Activated CD4-positive, alpha-beta T cell treated with anti-CD3 and anti-CD28 coated beads, Interleukin-2, amount 10 ng/mL, durations not matched to agents 24 days and 14 days (primary cell): ENCODE measurements at regions of chr6 and their contacts with region 1.

Region 1: GRCh38 chr6:90586836-90587638 is at the start of gene MAP3K7:
- DNase-seq: peak; percentile 99
- H3K4me3 Mint-ChIP-seq: peak within 1 kb of the TSS; percentile 92
- H3K27ac Mint-ChIP-seq: peak within 1 kb of the TSS; percentile 98
- H3K4me1 Mint-ChIP-seq: peaks cover 37% of the 10 kb centered on the region
- H3K27me3 Mint-ChIP-seq: peaks cover 26% of the 10 kb centered on the region
- total RNA-seq, gene MAP3K7: 31.8 TPM in 2 replicates

Region 2: DNA sequence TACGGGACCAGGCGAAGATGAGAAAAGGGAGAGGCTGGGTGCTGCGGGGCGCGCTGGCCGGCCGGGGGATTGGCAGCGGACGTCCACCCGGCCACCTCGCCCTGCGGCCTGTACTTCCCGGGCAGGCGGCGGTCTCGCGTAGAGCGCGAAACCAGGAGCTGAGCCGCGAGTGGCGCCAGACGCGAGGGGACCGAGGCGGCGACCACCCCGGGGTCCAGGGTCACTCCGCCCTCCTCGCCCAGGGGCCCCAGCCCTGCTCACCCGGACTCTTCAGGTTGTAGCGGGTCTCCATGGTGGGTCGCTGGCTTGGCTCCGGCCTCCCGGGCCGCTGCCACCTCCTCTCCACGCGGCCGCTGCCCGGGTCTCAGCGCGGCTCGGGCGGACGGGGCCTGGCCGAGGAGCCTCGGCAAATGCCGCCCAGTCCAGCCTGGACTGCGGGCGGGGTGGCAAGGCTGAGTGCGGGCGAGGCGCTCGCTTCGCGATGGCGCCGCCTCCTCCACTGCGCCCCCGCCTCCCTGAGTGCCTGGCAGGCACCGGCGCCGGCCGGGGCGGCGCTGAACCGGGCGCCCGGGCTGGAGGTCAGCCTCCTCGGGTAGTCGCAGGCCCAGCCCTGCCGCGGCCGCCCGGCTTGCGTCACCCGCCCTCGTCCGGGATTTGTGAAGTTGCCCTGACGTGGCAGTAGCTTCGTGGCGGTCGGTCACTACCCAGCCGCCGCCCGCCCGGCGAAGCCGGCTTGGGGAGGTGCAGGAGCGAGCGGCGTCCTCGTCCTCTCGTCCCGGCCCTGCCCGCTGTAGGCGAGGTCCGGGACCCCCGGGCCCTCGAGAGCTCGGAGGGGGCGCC is 1234.5 kb before region 1 on chr6 and contains the start of gene UBE2J1:
- intact Hi-C with region 1: loop called (anchors 5 kb)
- DNase-seq: peak; percentile 94
- H3K4me3 Mint-ChIP-seq: peak within 1 kb of the TSS; percentile 91
- H3K27ac Mint-ChIP-seq: peak within 1 kb of the TSS; percentile 94
- H3K4me1 Mint-ChIP-seq: peaks cover 66% of the 10 kb centered on the region
- H3K27me3 Mint-ChIP-seq: no peaks in the 10 kb centered on the region
- total RNA-seq, gene UBE2J1: 31.6 and 33.5 TPM in 2 replicates

Region 3: DNA sequence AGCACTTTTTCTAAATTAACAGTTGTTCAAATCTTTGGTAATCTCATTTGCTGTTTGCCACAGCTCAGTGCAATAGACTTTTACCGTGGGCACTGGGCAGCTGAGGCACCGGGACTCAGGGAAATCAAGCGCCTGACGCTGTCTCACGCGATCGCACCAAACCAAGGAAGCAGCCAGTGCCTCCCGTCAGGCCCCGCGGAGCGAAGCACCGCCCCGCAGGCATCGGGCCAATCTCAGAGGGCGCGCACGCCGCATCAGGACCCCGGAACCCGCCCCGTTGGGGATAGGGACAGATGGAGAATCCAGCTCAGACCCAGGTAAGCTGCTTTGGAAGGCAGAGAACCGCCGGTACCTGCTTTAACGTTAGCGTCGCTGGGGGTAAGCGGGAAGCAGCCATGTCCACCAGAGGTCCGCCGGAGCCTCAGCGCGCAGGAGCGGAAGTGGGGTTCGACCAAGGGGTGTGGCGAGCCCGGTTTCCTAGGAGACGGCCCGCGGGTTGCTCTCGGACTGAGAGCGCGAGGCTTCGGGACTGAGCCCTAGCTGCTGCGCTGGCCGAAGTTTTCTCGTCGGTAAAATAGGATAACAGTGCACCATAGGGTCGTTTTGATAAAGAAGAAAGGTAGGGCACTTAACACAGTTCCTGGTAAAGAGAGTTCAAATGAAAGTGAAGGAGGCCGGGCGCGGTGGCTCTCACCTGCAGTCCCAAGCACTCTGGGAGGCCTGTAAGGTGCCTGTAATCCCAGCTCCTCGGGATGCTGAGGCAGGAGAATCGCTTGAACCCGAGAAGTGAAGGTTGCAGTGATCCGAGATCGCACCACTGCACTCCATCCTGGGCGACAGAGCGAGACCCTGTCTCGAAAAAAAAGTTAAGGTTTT is 948.5 kb before region 1 on chr6 and contains the start of gene LYRM2:
- intact Hi-C with region 1: loop called (anchors 2 kb)
- DNase-seq: peak; percentile 97
- H3K4me3 Mint-ChIP-seq: peak within 1 kb of the TSS; percentile 90
- H3K27ac Mint-ChIP-seq: peak within 1 kb of the TSS; percentile 98
- H3K4me1 Mint-ChIP-seq: peaks cover 26% of the 10 kb centered on the region
- H3K27me3 Mint-ChIP-seq: no peaks in the 10 kb centered on the region
- total RNA-seq, gene LYRM2: 29.4 and 33.7 TPM in 2 replicates

Region 4: DNA sequence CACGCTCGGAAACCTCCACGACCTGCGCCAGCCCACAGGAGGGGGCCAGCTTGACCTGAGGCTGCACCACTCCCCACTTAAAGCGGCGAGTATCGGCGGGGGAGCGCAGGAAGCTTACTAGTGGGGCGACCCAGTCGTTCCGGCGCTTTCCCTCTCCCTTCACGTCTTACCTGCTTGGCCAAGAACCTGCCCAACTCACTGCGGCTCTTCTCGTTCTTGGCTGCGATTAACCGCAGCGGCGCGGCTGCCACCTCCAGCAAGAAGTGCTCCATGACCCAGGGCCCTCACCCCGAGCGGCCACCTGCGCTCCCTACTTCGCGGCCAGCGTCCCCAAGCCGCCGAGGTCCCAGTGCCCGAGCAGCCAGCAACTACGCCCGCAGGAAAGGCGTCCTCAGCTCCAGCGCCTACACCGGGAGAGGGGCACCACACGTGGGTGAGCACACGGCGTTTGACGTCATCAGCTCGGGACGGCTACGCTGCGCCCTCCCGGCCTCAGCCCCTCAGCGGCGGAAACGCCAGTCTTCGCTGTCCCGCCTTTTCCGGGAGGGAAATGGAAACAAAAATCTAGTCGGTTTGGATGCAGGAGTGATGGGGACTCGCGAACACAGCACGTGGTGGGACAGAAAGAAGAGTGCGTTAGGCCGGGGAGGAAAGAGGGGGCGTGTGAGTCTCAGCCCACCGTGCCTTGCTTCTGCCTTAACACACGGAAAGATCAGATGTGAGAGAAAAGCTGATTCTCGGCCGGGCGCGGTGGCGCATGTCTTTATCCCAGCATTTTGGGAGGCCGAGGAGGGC is 767.5 kb before region 1 on chr6 and contains the start of gene MDN1:
- intact Hi-C with region 1: loop called (anchors 2 kb)
- DNase-seq: peak; percentile 97
- H3K4me3 Mint-ChIP-seq: peak within 1 kb of the TSS; percentile 96
- H3K27ac Mint-ChIP-seq: peak within 1 kb of the TSS; percentile 98
- H3K4me1 Mint-ChIP-seq: peaks cover 21% of the 10 kb centered on the region
- H3K27me3 Mint-ChIP-seq: no peaks in the 10 kb centered on the region
- total RNA-seq, gene MDN1: 75.9 and 78.3 TPM in 2 replicates

Region 5: DNA sequence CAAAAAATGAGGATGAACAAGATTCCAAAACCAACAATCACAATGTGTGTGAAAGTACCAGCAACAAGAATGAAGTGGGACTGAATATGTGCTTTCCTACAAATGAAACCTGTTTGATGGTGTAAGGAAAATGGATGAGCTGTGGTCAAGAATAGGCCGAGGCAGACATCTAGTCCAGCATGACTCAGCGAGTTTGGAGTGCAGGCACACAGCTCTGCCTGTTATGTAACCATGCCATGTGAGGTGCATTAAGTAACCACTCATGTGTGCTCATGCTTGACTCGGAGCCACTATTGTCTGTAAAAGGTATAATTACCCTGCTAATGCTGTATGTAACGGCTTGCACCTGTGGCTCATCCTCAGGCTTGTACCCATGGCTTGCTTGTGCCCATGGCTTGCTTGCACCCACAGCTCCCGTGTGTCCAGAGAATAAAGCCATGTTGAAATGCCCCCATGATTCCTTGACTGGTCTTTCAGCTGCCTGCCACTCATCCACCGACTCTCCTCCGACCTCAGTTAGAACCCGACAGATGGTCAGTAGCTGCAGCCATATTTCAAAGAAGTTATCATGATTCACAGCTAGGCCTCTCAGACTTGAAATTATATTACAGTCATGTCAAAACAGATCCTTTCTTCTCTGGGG is 389.1 kb before region 1 on chr6:
- intact Hi-C with region 1: loop called (anchors 10 kb)
- DNase-seq: peak; percentile 58
- H3K4me3 Mint-ChIP-seq: no peak overlapping the region
- H3K27ac Mint-ChIP-seq: no peak overlapping the region
- H3K4me1 Mint-ChIP-seq: peaks cover 47% of the 10 kb centered on the region
- H3K27me3 Mint-ChIP-seq: no peaks in the 10 kb centered on the region

Region 6: GRCh38 chr6:90296346-90297114 is 290.5 kb before region 1 on chr6 and contains the start of gene BACH2:
- intact Hi-C with region 1: loop called (anchors 5 kb)
- DNase-seq: peak; percentile 97
- H3K4me3 Mint-ChIP-seq: peak within 1 kb of the TSS; percentile 94
- H3K27ac Mint-ChIP-seq: peak within 1 kb of the TSS; percentile 95
- H3K4me1 Mint-ChIP-seq: peaks cover 40% of the 10 kb centered on the region
- H3K27me3 Mint-ChIP-seq: peaks cover 23% of the 10 kb centered on the region
- total RNA-seq, gene BACH2: 69.0 and 69.2 TPM in 2 replicates

Region 7: DNA sequence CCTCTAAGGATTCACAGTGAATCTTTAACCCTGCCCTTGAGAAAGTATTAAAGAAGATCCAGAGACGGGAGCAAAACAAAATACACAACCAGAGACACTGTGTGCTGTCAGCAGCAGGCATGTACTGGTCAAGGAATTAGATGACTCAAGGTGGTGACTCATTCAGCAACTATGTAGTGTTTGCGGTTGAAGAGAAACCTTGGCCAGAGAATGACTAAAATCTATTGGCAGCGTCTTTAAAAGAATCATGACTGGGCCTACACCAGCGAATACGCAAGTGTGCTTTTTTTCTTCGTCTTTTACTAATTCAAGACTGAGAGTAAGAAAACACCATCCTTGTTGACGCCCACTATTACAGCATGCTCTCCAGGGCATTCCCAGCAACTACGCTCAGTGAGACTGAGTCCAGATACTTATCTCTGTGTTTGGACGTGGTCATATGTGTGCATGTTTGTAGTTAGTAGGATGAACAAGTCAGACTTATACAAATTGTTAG is 218.0 kb before region 1 on chr6:
- intact Hi-C with region 1: no loop called
- DNase-seq: peak; percentile 71
- H3K4me3 Mint-ChIP-seq: no peak overlapping the region
- H3K27ac Mint-ChIP-seq: peak overlapping the region; percentile 6
- H3K4me1 Mint-ChIP-seq: peaks cover 16% of the 10 kb centered on the region
- H3K27me3 Mint-ChIP-seq: peaks cover 6% of the 10 kb centered on the region

Region 8: DNA sequence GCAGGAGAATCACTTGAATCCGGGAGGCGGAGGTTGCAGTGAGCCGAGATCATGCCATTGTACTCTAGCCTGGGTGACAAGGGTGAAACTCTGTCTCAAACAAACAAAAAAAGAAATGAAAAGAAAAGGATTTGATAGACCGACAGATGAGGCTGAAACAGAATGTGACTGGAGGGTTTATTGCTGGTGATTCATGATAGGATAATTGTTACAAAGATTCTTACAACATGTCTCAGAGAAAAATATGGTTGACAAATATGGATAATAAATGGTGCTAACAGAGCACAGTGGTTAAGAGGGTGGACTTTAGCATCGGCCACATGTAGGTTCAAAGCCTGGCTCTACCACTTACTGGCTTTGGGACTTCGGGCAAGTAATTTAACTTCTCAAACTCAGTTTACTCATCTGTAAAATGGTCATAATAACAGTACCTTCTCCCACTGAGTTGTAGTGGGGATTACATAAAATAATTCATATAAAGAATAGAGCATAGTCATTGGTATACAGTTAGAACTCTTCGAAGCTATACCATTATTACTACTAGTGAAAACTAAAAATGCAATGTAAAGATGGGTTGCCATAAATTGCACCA is 132.1 kb before region 1 on chr6:
- intact Hi-C with region 1: no loop called
- DNase-seq: no peak
- H3K4me3 Mint-ChIP-seq: no peak overlapping the region
- H3K27ac Mint-ChIP-seq: peak overlapping the region; percentile 49
- H3K4me1 Mint-ChIP-seq: peaks cover 44% of the 10 kb centered on the region
- H3K27me3 Mint-ChIP-seq: no peaks in the 10 kb centered on the region

Region 9: GRCh38 chr6:90610751-90611542 is 23.9 kb after region 1 on chr6:
- intact Hi-C with region 1: loop called (anchors 1 kb)
- DNase-seq: peak; percentile 76
- H3K4me3 Mint-ChIP-seq: peak overlapping the region; percentile 92
- H3K27ac Mint-ChIP-seq: peak overlapping the region; percentile 73
- H3K4me1 Mint-ChIP-seq: peaks cover 10% of the 10 kb centered on the region
- H3K27me3 Mint-ChIP-seq: peaks cover 69% of the 10 kb centered on the region